ENCODE measurements at regions of chr11 and their contacts with region 1.

Region 1: DNA sequence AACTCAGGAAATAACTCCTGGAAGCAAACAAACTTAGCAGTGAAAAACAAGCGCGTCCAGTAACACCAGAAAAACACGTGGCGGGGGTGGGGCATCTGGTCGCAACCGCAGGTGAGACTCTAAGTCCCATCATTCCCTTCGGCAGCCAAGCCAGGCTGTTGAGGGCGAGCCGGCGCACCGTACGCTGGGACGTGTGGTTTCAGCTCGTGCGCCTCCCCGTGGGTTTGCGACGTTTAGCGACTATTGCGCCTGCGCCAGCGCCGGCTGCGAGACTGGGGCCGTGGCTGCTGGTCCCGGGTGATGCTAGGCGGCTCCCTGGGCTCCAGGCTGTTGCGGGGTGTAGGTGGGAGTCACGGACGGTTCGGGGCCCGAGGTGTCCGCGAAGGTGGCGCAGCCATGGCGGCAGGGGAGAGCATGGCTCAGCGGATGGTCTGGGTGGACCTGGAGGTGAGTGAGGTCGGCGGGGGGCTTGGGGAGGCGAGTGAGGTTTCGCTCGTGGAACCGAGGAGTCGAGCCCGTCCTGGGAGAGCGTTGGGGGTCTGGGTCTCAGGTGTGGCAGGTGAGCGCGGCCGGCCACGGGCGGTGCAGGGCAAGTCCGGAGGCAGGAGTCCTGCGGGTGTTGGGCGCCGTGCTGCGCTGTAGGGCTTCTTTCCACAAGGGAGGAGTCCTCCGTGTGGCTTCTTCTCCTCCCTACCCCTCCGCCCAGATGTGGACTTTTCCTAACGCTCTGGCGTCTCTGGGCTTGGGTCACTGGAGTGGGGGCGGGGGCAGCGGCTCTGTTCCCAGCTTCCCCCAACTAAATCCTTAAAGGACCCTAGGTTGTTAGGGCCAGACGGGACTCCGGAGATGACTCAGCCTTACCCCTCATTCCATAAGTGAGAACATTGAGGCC is at the start of gene REXO2:
- DNase-seq: peak; percentile 95
- H3K4me3 Mint-ChIP-seq: peak within 1 kb of the TSS; percentile 94
- H3K27ac Mint-ChIP-seq: peak within 1 kb of the TSS; percentile 82
- H3K4me1 Mint-ChIP-seq: peaks cover 23% of the 10 kb centered on the region
- H3K27me3 Mint-ChIP-seq: no peaks in the 10 kb centered on the region
- total RNA-seq, gene REXO2: 51.1 to 51.4 TPM

Region 2: GRCh38 chr11:113875234-113876073 is 564.0 kb before region 1 on chr11 and contains the start of gene USP28:
- CTCF ChIA-PET with region 1: no interaction called
- intact Hi-C with region 1: loop called (anchors 2 kb)
- DNase-seq: peak; percentile 71
- H3K4me3 Mint-ChIP-seq: peak within 1 kb of the TSS; percentile 95
- H3K27ac Mint-ChIP-seq: peak within 1 kb of the TSS; percentile 87
- H3K4me1 Mint-ChIP-seq: peaks cover 34% of the 10 kb centered on the region
- H3K27me3 Mint-ChIP-seq: no peaks in the 10 kb centered on the region
- total RNA-seq, gene USP28: 26.1 to 26.8 TPM

Region 3: GRCh38 chr11:114307524-114308203 is 131.8 kb before region 1 on chr11:
- CTCF ChIA-PET with region 1: no interaction called
- intact Hi-C with region 1: no loop called
- DNase-seq: no peak
- H3K4me3 Mint-ChIP-seq: no peak overlapping the region
- H3K27ac Mint-ChIP-seq: no peak overlapping the region
- H3K4me1 Mint-ChIP-seq: peaks cover 11% of the 10 kb centered on the region
- H3K27me3 Mint-ChIP-seq: peaks cover 18% of the 10 kb centered on the region

Region 4: DNA sequence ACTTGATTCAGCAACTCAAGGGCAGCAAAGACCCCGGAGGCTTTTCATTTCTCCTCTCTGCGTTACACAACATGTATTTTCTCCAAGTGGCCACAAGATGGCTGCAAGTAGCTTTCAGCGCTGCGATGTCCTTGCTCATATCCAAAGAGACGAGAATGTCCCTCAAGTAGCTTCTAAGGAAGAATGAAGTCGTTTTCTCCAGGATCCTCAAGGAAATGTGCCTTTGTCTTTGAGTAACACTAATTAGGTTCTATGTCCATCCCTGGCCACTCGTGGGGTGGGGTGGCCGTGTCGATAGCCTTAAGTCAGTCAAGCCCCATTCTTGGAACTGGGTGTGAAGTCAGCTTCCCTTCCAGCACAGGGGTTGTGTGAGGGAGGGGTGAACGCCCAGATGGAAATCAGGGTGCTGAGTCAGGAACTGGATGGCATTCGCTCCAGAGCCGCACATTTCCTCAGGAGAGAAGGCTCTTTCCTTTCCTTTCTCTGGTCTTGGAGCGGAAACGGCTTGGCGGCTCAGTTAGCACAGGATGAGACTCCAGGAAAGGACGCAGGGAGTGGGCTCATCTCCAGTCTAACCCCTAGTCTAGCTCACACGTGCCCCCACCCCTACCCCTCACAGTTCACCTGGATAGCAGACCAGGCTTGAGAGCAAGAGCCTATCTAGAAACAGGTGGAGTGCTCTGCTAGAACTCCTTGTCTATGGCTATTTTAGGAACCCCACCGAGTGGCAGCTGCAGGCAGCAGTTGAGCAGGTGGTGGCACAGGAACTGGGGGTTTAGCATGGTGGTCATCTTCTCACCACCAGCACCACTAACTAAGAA is 99.0 kb before region 1 on chr11:
- CTCF ChIA-PET with region 1: no interaction called
- intact Hi-C with region 1: loop called (anchors 2 kb)
- DNase-seq: peak; percentile 56
- H3K4me3 Mint-ChIP-seq: peak overlapping the region; percentile 55
- H3K27ac Mint-ChIP-seq: no peak overlapping the region
- H3K4me1 Mint-ChIP-seq: peaks cover 13% of the 10 kb centered on the region
- H3K27me3 Mint-ChIP-seq: no peaks in the 10 kb centered on the region

Region 5: GRCh38 chr11:114377612-114378267 is 61.7 kb before region 1 on chr11:
- CTCF ChIA-PET with region 1: no interaction called
- intact Hi-C with region 1: no loop called
- DNase-seq: no peak
- H3K4me3 Mint-ChIP-seq: no peak overlapping the region
- H3K27ac Mint-ChIP-seq: no peak overlapping the region
- H3K4me1 Mint-ChIP-seq: peaks cover 14% of the 10 kb centered on the region
- H3K27me3 Mint-ChIP-seq: no peaks in the 10 kb centered on the region

Region 6: DNA sequence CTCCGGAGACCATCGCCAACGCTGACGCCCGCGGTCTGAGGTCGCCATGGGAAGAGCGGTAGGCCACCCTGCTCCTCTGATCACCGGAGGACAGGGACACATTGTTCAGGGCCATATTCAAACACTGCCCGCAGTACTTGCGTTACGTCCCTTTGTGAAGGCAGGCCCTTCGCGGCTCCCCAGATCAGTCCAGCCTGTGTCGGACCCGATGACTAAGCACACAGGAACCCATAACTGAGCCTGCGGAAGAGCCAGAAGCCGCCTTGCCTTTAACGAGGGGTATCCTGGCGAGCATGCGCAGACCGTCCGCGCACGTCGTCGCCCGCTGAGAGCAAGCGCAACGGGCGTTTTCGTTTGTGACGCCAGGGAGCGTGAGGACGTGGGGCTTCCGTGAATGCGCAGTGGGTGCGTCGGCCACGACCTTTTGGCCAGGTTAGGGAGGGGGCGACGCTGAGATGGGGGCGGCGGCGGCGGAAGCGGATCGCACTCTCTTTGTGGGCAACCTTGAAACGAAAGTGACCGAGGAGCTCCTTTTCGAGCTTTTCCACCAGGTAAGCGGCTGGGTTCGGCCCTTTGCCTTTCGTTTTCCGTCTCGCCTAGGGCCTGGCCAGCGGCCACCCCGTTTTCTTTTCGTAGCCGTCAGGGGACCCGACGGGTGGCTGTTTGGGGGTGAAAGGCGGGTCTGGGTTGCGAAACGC is 39.1 kb before region 1 on chr11 and contains the starts of genes C11orf71 and RBM7:
- CTCF ChIA-PET with region 1: interaction called, 3 read pairs
- intact Hi-C with region 1: loop called (anchors 1 kb)
- DNase-seq: peak; percentile 98
- H3K4me3 Mint-ChIP-seq: peak within 1 kb of the TSS; percentile 90
- H3K27ac Mint-ChIP-seq: peak within 1 kb of the TSS; percentile 97
- H3K4me1 Mint-ChIP-seq: peaks cover 44% of the 10 kb centered on the region
- H3K27me3 Mint-ChIP-seq: no peaks in the 10 kb centered on the region
- total RNA-seq, gene C11orf71: 7.5 to 7.6 TPM
- total RNA-seq, gene RBM7: 36.9 to 41.7 TPM

Region 7: DNA sequence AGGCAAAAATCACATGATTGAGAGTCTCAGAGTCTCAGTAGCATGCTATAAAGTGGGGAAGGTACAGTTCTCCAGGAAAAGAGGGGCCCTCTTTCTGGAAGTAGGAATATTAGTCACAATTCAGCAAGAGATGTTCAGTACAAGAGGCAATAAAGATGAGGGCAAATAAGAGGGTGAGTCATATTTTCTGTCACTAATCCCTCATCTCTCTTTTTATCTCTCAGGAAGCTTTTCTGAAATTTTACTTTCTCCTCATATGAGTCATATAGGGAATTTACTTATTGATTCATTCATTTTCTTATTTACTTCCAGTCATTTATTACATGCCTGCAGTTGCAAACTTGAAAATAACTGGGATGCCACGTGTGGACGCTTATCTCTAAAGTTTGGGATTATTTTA is 123.6 kb after region 1 on chr11:
- CTCF ChIA-PET with region 1: interaction called, 3 read pairs
- intact Hi-C with region 1: loop called (anchors 5 kb)
- DNase-seq: no peak
- H3K4me3 Mint-ChIP-seq: no peak overlapping the region
- H3K27ac Mint-ChIP-seq: peak overlapping the region; percentile 20
- H3K4me1 Mint-ChIP-seq: peaks cover 11% of the 10 kb centered on the region
- H3K27me3 Mint-ChIP-seq: peaks cover 2% of the 10 kb centered on the region

Measured in activated naive CD4-positive, alpha-beta T cell treated with anti-CD3 and anti-CD28 coated beads for 36 hours (primary cell).